Naive thymus-derived CD8-positive, alpha-beta T cell (primary cell): ENCODE measurements at regions of chr17 and their contacts with region 1.

Region 1: DNA sequence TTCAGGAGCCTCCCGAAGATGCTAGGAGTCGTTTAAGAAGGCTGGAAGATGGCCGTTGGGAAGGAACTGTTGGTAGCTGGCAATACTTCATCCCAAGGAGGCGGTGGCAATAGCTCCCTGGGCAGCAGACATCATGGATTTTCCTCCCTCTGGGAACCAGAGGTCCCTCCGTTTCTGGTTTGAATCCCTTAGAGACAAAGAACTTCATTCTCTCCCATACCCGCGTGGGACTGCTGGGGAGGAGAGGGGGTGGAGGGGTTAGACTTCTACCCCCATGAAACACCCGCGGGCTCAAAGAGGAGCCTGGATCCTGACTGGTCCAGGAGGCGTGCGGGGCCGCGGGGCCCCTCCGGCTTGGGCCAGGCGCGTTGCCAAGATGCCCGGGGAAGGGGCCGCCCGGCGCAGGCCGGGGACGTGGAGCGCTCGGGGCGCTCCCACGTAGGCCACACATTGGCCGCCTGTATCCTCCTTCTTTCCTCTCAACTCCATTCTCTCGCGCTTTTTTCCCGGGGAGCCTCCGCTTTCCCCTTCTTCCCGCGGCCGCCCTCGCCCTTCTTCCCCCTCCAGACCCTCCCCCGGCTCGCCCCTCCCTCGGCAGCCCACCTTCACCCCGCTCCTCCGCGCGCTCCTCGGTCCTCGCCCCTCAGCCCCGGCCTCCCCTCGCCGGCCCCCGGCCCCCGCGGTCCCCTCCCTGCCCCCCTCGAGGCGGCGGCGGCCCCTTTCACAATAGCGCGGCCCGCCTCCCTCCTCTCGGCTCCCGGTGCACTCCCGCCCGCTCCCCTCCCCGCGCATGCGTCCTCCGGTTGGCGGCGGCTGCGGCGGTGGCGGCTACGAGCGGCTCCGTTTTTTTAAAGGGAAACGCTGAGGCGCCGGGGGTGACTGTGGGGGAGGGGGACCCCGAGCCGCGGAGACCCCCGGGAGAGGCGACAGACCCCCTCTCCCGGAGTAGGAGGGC is at the start of gene MSL1:
- DNase-seq: peak; percentile 76 to 92 (median 85)
- ATAC-seq: peak; percentile 67 to 69
- H3K4me3 Mint-ChIP-seq: peak within 1 kb of the TSS; percentile 71 to 97 (median 84)
- H3K27ac Mint-ChIP-seq: peak within 1 kb of the TSS; percentile 77 to 93 (median 84)
- H3K4me1 Mint-ChIP-seq: peaks cover 25 to 46% (median 44%) of the 10 kb centered on the region in 4 donors
- H3K27me3 Mint-ChIP-seq: no peaks in the 10 kb centered on the region
- polyA plus RNA-seq, gene MSL1: 6.8 to 12.8 (median 9.2) TPM

Region 2: DNA sequence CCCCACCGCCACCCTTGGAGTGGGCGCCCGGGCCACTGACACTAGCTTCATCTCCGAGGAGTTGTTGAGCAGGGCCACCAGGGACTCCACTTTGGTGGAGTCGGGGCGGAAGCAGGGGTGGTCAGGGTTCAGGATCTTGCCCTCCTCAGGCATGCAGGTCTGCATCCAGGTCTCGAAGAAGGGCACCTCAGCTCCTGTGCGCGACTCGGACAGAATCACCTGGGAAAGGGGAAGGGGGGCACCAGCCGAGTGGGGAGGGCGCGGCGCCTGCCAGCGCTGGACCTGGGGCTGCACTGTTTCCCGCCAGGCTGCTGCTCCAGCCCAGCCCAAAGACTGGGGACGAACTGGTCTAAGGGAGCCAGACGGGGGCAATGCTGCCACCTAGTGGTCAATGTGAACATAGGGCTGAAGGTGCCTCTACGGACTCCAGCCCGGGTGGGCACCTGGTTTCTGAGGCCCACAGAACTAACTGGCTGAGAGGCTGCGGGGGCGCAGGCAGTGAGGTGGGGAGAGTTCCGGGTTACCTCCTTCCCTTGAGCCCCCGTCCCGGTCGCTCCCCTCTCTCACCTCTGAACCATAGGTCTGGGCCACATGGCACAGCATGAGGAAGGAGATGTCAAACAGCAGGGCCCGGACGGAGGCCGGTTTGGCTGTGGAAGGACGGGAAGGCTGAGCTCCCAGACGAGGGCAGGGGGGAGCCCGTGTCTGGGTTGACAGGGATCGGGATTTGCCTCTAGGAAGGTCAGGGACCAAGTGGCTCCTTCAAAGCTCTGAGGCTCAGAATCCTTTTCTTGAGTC is 94.4 kb before region 1 on chr17:
- POLR2A ChIA-PET with region 1: no interaction called
- DNase-seq: peak; percentile 50 to 85 (median 74)
- ATAC-seq: peak; percentile 88
- H3K4me3 Mint-ChIP-seq: peak overlapping the region in 4 of 10 donors; percentile 33 to 55 (median 34)
- H3K27ac Mint-ChIP-seq: peak overlapping the region in 1 of 10 donors; percentile 8
- H3K4me1 Mint-ChIP-seq: peaks cover 17 to 25% (median 22%) of the 10 kb centered on the region in 4 donors
- H3K27me3 Mint-ChIP-seq: no peaks in the 10 kb centered on the region

Region 3: GRCh38 chr17:40139566-40140058 is 18.2 kb after region 1 on chr17:
- POLR2A ChIA-PET with region 1: interaction called, 98 read pairs
- DNase-seq: peak in 1 of 10 donors; percentile 11
- ATAC-seq: peak in 1 of 2 donors; percentile 26
- H3K4me3 Mint-ChIP-seq: peak overlapping the region; percentile 86 to 98 (median 95)
- H3K27ac Mint-ChIP-seq: peak overlapping the region; percentile 95 to 100 (median 99)
- H3K4me1 Mint-ChIP-seq: peaks cover 14 to 51% (median 41%) of the 10 kb centered on the region in 4 donors
- H3K27me3 Mint-ChIP-seq: peaks cover 0 to 1% (median 0%) of the 10 kb centered on the region in 5 donors

Region 4: DNA sequence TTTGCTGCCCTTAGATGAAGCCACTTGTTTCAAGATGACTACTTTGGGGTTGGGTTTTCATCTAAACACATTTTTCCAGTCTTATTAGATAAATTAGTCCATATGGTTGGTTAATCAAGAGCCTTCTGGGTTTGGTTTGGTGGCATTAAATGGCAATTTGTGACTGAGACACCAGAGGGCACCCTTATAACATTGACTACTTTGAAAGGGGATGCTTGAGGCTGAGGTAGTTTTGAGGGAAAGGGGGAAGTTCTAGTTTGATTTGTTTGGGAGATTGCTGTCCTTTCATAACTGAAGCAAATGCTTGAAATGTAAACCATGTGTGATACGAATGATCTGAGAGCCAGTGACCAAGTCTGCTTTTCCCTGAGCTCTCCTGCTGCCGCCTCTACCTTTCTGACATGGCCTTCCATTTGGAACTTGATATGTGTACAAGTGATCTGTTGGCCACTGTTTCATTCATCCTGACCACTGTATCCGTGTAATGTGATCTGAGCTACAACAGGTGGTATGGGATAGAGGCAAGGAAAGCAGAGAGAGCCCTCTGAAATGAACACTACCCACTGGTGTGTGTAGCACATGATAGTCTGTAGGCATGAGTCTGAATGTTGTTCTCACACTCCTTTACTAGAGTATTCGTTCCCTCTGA is 181.7 kb after region 1 on chr17:
- POLR2A ChIA-PET with region 1: no interaction called
- DNase-seq: peak in 8 of 10 donors; percentile 46 to 78 (median 64)
- ATAC-seq: peak; percentile 44 to 55
- H3K4me3 Mint-ChIP-seq: peak overlapping the region in 2 of 10 donors; percentile 2 to 19
- H3K27ac Mint-ChIP-seq: peak overlapping the region in 6 of 10 donors; percentile 2 to 53 (median 12)
- H3K4me1 Mint-ChIP-seq: peaks cover 14 to 18% (median 17%) of the 10 kb centered on the region in 4 donors
- H3K27me3 Mint-ChIP-seq: no peaks in the 10 kb centered on the region